ENCODE measurements at regions of chr1 and their contacts with region 1.

Region 1: DNA sequence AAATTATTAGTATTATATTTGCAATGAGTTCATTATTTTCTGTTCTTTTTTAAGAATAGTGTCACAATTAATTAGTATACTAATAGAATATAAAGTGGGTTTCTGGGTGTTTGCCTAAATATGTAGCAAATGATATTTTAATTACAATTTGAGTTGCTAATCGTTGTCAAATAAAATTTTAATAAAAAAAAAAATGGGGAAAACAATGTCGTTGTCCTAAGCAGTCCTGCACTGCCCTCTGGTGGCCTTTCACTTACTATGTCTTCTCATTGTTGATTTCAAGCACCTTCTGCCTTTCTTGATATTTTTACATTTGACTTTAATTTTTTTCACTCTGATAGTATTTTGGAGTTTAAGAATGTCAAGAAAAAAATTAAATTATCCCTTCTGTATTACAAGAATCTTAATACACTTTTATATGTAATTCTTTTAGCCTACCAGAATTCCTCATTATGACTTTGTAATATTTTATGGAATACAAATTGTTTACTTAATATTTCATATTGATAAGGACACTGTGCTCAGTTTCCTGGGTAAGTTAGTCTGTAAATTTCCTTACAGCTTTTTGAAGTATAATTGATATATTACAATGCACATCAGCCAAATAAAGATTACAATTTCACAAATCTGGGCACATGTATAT is 104.5 kb upstream of the FMN2 start:
- DNase-seq: no peak
- H3K4me3 ChIP-seq: no peak overlapping the region
- H3K27ac ChIP-seq: no peak overlapping the region
- H3K4me1 ChIP-seq: no peaks in the 10 kb centered on the region
- H3K27me3 ChIP-seq: no peaks in the 10 kb centered on the region
- CTCF ChIP-seq: peak; percentile 90
- EP300 ChIP-seq: no peak
- RAD21 ChIP-seq: peak; percentile 82

Region 2: GRCh38 chr1:240004086-240004749 is 17.0 kb after region 1 on chr1:
- CTCF ChIA-PET with region 1: interaction called, 12 read pairs
- POLR2A ChIA-PET with region 1: no interaction called
- DNase-seq: peak; percentile 56
- H3K4me3 ChIP-seq: no peak overlapping the region
- H3K27ac ChIP-seq: no peak overlapping the region
- H3K4me1 ChIP-seq: peaks cover 3 to 8% of the 10 kb centered on the region in 2 experiments; a peak in 1 of 4 replicates
- H3K27me3 ChIP-seq: no peaks in the 10 kb centered on the region
- CTCF ChIP-seq: peak; percentile 86
- EP300 ChIP-seq: no peak
- RAD21 ChIP-seq: peak; percentile 41